ENCODE measurements at regions of chr2 and their contacts with region 1.

Region 1: DNA sequence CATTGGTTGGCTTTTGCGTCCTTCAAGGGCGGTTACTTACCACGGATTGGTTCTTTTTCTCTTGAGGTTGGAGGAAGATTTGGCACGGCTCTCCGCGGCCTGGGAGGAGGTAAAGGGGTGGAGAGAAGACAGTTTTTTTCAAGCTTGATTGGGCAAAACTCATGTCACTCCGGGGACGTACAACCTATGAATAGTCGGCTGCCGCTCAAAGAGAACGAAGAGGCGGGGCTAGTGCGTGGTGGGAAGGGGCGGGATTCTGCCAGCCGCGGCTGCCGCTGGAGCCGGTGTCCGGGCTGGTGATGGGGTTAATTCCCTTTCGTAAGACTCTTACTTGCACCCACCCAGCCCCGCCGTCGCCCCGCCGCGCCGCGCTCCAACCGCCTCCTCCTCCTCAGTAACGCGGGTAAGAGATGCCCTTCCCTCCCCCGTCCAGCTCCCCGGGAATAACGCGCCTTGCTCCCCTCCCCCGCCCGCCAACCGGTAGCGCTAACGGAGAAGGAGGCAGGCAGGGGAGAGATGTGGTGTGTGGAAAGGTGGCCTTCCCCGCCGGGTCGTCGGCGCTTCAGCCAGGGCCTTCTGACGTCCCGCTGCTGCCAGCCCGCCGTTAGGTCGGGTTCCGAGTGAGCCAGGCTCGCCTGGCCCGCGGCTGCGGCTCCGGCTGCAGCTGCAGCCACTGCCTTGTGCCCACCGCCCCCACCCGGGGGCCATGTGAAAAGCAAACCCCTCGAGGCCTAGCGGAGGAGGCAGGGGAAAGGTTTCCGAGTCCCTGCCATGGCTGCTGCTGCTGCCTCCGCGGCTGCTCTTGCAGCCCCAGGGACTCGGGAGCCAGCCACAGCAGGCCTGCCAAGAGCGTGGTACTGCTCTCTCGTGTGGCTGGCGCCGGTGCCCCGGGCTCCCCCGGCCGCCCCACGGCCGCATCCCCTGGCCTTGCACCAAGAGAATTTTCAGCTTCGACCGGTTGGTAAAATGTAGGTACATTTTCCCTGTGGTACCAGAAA is at the start of gene R3HDM1:
- DNase-seq: peak; percentile 84 to 99 (median 92)
- ATAC-seq: peak; percentile 77
- H3K4me3 ChIP-seq: peak within 1 kb of the TSS; percentile 88
- H3K4me3 Mint-ChIP-seq: no peak within 1 kb of the TSS
- H3K27ac ChIP-seq: peak within 1 kb of the TSS; percentile 79 to 94
- H3K27ac Mint-ChIP-seq: no peak within 1 kb of the TSS
- H3K4me1 ChIP-seq: peaks cover 16% of the 10 kb centered on the region
- H3K4me1 Mint-ChIP-seq: peaks cover 32% of the 10 kb centered on the region
- H3K27me3 ChIP-seq: no peaks in the 10 kb centered on the region
- H3K27me3 Mint-ChIP-seq: no peaks in the 10 kb centered on the region
- CTCF ChIP-seq: no peak
- total RNA-seq, gene R3HDM1: 39.7 to 41.4 TPM

Region 2: DNA sequence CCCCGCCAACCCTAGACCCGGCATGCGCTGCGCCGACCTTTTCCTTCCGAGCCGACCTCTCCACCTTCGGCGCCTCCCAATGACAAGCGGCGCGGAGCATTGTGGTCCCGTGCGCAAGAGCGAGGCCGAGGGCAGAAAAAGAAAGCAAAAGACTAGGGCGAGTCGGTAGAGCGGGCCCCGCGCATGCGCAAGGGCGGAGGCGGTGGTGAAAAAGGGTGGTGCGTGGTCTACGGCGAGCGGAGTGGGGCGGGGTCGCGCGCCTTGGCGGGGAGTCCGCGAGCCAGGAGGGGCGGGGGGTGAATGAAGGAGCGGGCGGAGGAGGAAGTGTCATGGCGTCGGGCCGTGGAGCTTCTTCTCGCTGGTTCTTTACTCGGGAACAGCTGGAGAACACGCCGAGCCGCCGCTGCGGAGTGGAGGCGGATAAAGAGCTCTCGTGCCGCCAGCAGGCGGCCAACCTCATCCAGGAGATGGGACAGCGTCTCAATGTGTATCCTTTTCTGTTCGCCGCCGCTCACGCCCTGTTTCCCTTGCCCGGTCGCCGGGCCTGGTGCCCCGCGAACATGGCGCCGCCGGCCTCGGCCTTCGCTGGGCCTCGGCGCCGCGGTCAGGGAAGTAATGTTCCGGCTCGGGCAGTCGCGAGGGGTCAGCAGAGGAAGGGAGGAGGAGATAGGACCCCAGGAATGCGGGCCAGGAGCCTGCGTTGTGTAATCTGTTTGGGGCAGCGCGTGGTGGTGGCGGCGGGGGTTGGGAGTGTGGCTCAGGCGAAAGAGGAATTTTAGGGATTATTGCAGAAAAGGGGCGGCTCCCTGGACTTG is 612.8 kb before region 1 on chr2 and contains the start of gene CCNT2:
- CTCF ChIA-PET with region 1: no interaction called
- POLR2A ChIA-PET with region 1: interaction called, 49 read pairs
- intact Hi-C with region 1: loop called (anchors 1 to 2 kb)
- DNase-seq: peak; percentile 98 to 100 (median 99)
- ATAC-seq: peak; percentile 82
- H3K4me3 ChIP-seq: peak within 1 kb of the TSS; percentile 88
- H3K4me3 Mint-ChIP-seq: peak within 1 kb of the TSS; percentile 92
- H3K27ac ChIP-seq: peak within 1 kb of the TSS; percentile 95 to 96
- H3K27ac Mint-ChIP-seq: peak within 1 kb of the TSS; percentile 92
- H3K4me1 ChIP-seq: peaks cover 25% of the 10 kb centered on the region
- H3K4me1 Mint-ChIP-seq: peaks cover 57% of the 10 kb centered on the region
- H3K27me3 ChIP-seq: no peaks in the 10 kb centered on the region
- H3K27me3 Mint-ChIP-seq: no peaks in the 10 kb centered on the region
- CTCF ChIP-seq: no peak
- total RNA-seq, gene CCNT2: 62.1 to 67.5 TPM

Region 3: DNA sequence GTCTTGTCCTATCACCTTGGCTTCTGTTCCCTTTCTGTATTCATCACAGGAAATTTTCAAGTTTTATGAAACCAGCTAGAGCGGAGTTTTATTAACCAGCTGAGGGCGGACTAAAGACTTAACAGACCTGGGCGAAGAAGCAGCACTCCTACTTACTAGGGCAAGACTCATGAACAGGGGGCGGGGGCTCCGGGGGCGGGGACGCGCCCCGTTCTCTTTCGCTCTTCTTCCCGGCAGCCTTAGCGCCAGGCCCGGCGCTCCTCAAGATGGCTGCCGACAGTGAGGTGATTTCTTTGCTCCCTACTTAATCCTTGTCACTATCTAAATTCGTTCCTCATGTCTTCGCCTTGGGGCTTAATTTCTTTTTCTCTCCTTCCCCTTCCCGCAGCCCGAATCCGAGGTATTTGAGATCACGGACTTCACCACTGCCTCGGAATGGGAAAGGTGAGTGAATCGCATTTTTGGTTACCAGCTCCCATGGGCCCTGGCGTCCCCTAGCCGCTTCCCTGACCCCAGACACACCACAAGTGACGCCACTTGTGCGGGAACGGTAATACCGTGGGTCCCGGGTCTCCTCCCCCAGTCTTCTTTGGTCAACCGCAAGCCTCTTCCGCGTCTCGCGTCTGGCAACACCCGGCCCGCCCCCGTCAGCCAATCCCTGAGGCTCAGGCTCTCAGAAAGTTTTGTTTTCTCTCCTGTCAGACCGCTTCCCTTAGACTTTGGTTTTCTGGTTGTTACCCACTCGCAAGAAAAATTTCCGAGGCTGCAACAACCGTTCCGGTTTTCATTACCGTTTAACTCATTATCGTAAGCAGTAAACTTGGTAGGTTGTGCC is 479.3 kb before region 1 on chr2 and contains the start of gene RAB3GAP1:
- CTCF ChIA-PET with region 1: no interaction called
- POLR2A ChIA-PET with region 1: interaction called, 18 read pairs
- intact Hi-C with region 1: loop called in 1 of 2 experiments (anchors 1 kb)
- DNase-seq: peak; percentile 79 to 98 (median 89)
- ATAC-seq: peak; percentile 82
- H3K4me3 ChIP-seq: peak within 1 kb of the TSS; percentile 66
- H3K4me3 Mint-ChIP-seq: peak within 1 kb of the TSS; percentile 97
- H3K27ac ChIP-seq: peak within 1 kb of the TSS; percentile 96
- H3K27ac Mint-ChIP-seq: peak within 1 kb of the TSS; percentile 99
- H3K4me1 ChIP-seq: peaks cover 18% of the 10 kb centered on the region
- H3K4me1 Mint-ChIP-seq: peaks cover 38% of the 10 kb centered on the region
- H3K27me3 ChIP-seq: no peaks in the 10 kb centered on the region
- H3K27me3 Mint-ChIP-seq: no peaks in the 10 kb centered on the region
- CTCF ChIP-seq: no peak
- total RNA-seq, gene RAB3GAP1: 35.9 to 37.0 TPM

Region 4: GRCh38 chr2:135590619-135591260 is 59.2 kb after region 1 on chr2:
- CTCF ChIA-PET with region 1: no interaction called
- POLR2A ChIA-PET with region 1: interaction called, 23 read pairs
- intact Hi-C with region 1: loop called in 1 of 2 experiments (anchors 5 kb)
- DNase-seq: peak in 2 of 14 experiments; percentile 4 to 23
- ATAC-seq: peak; percentile 61
- H3K4me3 ChIP-seq: peak overlapping the region; percentile 6
- H3K4me3 Mint-ChIP-seq: peak overlapping the region; percentile 72
- H3K27ac ChIP-seq: peak overlapping the region in 1 of 2 donors; percentile 25
- H3K27ac Mint-ChIP-seq: peak overlapping the region; percentile 88
- H3K4me1 ChIP-seq: no peaks in the 10 kb centered on the region
- H3K4me1 Mint-ChIP-seq: peaks cover 80% of the 10 kb centered on the region
- H3K27me3 ChIP-seq: no peaks in the 10 kb centered on the region
- H3K27me3 Mint-ChIP-seq: no peaks in the 10 kb centered on the region
- CTCF ChIP-seq: no peak

Region 5: DNA sequence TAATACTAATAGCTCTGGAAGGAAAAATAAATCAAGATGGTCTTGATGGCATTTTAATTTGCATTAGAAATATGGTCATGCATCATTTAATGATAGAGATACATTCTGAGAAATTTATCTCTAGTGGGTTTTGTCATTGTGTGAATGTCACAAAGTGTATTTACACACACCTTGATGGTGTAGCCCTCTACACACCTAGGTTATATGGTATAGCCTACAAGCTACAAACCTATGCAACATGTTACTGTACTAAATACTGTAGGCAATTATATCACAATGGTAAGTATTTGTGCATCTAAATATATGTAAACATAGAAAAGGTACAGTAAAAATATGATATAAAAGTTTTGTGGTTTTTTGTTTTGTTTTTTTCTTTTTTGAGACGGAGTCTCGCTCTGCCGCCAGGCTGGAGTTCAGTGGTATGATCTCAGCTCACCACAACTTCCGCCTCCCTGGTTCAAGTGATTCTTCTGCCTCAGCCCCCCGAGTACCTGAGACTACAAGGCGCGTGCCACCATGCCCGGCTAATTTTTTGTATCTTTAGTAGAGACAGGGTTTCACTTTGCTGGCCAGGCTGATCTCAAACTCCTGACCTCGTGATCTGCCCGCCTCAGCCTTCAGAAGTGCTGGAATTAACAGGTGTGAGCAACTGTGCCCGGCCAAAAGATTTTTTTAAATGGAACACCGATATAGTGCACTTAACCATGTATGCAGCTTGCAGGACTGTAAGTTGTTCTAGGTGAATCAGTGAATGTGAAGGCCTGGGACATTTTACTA is 126.5 kb after region 1 on chr2:
- CTCF ChIA-PET with region 1: no interaction called
- POLR2A ChIA-PET with region 1: interaction called, 12 read pairs
- intact Hi-C with region 1: loop called in 1 of 2 experiments (anchors 5 kb)
- DNase-seq: peak; percentile 32 to 76 (median 55)
- ATAC-seq: peak; percentile 93
- H3K4me3 ChIP-seq: peak overlapping the region; percentile 30
- H3K4me3 Mint-ChIP-seq: peak overlapping the region; percentile 86
- H3K27ac ChIP-seq: no peak overlapping the region
- H3K27ac Mint-ChIP-seq: peak overlapping the region; percentile 93
- H3K4me1 ChIP-seq: no peaks in the 10 kb centered on the region
- H3K4me1 Mint-ChIP-seq: peaks cover 17% of the 10 kb centered on the region
- H3K27me3 ChIP-seq: no peaks in the 10 kb centered on the region
- H3K27me3 Mint-ChIP-seq: no peaks in the 10 kb centered on the region
- CTCF ChIP-seq: no peak

Region 6: DNA sequence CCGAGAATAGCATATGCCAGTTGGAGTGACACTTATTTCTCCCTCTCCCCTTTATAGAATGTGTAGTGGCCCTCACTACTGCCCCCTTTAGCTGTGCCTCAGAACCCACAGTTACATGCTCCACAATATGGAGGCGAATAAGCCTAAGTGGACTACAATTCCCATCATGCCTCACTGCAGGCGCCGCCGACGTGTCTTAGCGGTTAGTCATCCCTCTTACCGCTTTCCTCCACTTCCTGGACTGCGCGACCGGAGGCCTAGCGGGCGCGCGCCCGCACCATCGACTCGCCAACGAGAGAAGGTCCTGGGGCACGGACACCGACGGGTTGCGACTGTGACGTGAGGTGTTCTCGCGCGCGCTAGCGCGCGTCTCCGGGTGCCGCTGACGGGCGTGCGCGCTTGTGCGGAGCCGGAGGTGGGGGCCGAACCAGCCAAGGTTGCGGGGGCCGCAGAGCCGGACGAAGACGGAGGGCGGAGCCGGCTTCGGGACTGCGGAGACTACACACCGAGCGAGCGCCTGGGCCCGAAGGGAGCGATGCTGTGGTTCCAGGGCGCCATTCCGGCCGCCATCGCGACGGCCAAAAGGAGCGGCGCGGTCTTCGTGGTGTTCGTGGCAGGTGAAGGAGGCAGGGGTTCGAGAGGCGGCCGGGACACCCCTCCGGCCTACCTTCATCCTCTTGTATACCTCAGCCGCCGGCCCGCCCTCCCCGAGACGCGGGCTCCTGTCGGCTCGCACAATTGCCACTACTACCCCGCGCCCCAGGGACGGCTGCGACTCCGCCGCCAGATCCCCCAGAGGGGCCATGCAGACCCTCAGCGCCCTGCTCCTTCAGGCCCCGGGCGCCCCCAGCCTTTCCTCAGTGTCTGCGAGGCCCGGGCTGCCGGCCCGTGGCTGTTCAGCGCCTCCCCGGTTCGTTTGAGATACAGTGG is 210.1 kb after region 1 on chr2 and contains the start of gene UBXN4:
- CTCF ChIA-PET with region 1: no interaction called
- POLR2A ChIA-PET with region 1: interaction called, 26 read pairs
- intact Hi-C with region 1: loop called (anchors 1 to 2 kb)
- DNase-seq: peak; percentile 86 to 99 (median 93)
- ATAC-seq: peak; percentile 87
- H3K4me3 ChIP-seq: peak within 1 kb of the TSS; percentile 94
- H3K4me3 Mint-ChIP-seq: peak within 1 kb of the TSS; percentile 95
- H3K27ac ChIP-seq: peak within 1 kb of the TSS; percentile 95 to 98
- H3K27ac Mint-ChIP-seq: peak within 1 kb of the TSS; percentile 92
- H3K4me1 ChIP-seq: peaks cover 11% of the 10 kb centered on the region
- H3K4me1 Mint-ChIP-seq: peaks cover 46% of the 10 kb centered on the region
- H3K27me3 ChIP-seq: no peaks in the 10 kb centered on the region
- H3K27me3 Mint-ChIP-seq: no peaks in the 10 kb centered on the region
- CTCF ChIP-seq: peak; percentile 17
- total RNA-seq, gene UBXN4: 143 to 150 TPM

Region 7: GRCh38 chr2:135876066-135876711 is 344.7 kb after region 1 on chr2 and contains the start of gene MCM6:
- CTCF ChIA-PET with region 1: no interaction called
- POLR2A ChIA-PET with region 1: interaction called, 8 read pairs
- intact Hi-C with region 1: loop called in 1 of 2 experiments (anchors 5 kb)
- DNase-seq: peak; percentile 94 to 100 (median 96)
- ATAC-seq: peak; percentile 89
- H3K4me3 ChIP-seq: peak within 1 kb of the TSS; percentile 94
- H3K4me3 Mint-ChIP-seq: peak within 1 kb of the TSS; percentile 97
- H3K27ac ChIP-seq: peak within 1 kb of the TSS; percentile 76 to 83
- H3K27ac Mint-ChIP-seq: peak within 1 kb of the TSS; percentile 99
- H3K4me1 ChIP-seq: peaks cover 19% of the 10 kb centered on the region
- H3K4me1 Mint-ChIP-seq: peaks cover 48% of the 10 kb centered on the region
- H3K27me3 ChIP-seq: no peaks in the 10 kb centered on the region
- H3K27me3 Mint-ChIP-seq: no peaks in the 10 kb centered on the region
- CTCF ChIP-seq: no peak
- total RNA-seq, gene MCM6: 31.5 to 34.4 TPM

Region 8: GRCh38 chr2:136034629-136035028 is 503.1 kb after region 1 on chr2:
- CTCF ChIA-PET with region 1: no interaction called
- POLR2A ChIA-PET with region 1: no interaction called
- intact Hi-C with region 1: no loop called
- DNase-seq: no peak
- ATAC-seq: no peak
- H3K4me3 ChIP-seq: no peak overlapping the region
- H3K4me3 Mint-ChIP-seq: no peak overlapping the region
- H3K27ac ChIP-seq: no peak overlapping the region
- H3K27ac Mint-ChIP-seq: no peak overlapping the region
- H3K4me1 ChIP-seq: no peaks in the 10 kb centered on the region
- H3K4me1 Mint-ChIP-seq: no peaks in the 10 kb centered on the region
- H3K27me3 ChIP-seq: no peaks in the 10 kb centered on the region
- H3K27me3 Mint-ChIP-seq: no peaks in the 10 kb centered on the region
- CTCF ChIP-seq: no peak

Measured in CD4-positive, alpha-beta T cell (primary cell).